ENCODE measurements at regions of chr1 and their contacts with region 1.

Region 1: DNA sequence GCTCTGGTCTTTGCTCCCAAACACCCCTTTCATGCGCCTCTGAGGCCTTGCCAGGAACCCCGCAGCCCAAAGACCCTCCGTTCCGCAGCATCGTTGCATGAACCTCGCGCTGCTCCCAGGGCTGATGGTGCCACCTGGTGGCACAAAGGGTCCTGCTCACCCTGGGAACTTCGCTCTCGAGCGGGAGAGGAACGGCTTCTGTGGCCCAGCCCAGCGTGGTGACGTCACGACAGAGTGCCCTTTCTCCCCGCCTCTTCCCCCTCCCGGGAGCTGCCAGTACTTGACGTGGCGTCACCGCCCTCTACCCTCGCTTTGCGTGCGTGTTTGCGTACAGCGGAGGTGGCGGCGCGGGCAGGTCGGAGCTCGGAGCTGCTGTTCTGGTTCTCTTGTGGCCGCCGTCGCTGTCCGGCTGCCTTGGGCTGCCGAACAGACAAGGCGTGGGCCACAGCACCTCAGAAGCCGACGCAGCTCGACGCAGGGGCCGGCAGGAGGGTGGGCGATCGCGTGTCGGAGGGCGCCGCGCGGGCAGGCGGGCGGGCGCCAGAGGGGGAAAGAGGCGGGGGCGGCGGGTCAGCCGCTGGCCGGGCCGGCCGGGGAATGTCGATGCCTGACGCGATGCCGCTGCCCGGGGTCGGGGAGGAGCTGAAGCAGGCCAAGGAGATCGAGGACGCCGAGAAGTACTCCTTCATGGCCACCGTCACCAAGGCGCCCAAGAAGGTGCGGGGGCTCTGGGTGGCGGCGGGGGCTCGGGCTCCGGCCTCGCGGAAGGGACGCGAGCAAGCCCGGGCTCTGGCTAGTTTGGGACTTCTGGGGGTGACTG is at the start of gene AHCYL1:
- DNase-seq: peak; percentile 92 to 97
- ATAC-seq: peak; percentile 84 to 89
- H3K4me3 ChIP-seq: peak within 1 kb of the TSS; percentile 89
- H3K27ac ChIP-seq: peak within 1 kb of the TSS; percentile 95 to 98
- H3K4me1 ChIP-seq: peaks cover 72% of the 10 kb centered on the region
- CTCF ChIP-seq: peak; percentile 86
- EP300 ChIP-seq: no peak
- POLR2A ChIP-seq: peak; percentile 77
- RAD21 ChIP-seq: peak; percentile 97 to 99
- polyA plus RNA-seq, gene AHCYL1: 147 and 148 TPM in 2 replicates

Region 2: DNA sequence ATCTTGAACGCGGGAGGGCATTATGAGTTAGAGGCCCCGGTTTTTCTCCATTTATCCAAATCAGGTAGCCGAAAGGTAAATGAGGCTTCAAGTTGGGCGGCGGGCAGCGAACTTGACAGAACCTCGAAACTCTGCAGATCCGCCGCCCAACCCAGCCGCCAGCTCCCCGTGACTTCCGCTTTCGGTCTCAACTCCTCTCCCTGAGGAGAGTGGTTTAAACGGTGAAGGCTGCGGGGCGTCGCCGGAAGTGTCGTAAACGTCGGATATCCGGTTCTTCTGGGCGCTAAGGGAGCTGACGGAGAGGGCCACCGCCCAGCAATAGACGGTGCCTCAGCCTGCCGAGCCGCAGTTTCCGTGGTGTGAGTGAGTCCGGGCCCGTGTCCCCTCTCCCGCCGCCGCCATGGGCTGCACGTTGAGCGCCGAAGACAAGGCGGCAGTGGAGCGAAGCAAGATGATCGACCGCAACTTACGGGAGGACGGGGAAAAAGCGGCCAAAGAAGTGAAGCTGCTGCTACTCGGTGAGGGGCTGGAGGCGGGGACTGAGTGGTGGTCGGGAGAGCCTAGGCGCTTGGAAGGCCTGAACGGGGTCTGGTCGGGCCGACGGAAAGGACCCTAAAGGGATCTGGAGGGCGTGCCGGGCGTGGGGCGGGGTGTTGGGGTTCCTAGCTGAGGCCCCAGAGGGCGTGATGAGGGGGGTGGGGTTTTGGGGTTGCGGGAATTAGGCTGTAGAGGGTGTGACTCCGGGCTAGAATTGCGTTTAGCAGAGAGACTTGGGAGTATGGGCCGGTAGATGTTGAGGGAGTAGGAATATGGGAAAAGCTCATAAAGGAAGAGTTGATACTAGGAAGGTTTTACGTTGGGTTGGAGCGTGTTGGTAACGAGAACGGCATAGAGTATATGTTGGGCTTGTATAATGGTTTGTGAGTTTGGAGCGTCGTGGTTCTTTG is 436.1 kb before region 1 on chr1 and contains the start of gene GNAI3:
- CTCF ChIA-PET with region 1: interaction called, 21 read pairs
- POLR2A ChIA-PET with region 1: interaction called, 14 read pairs
- DNase-seq: peak; percentile 91 to 93
- ATAC-seq: peak; percentile 97 to 99
- H3K4me3 ChIP-seq: peak within 1 kb of the TSS; percentile 99
- H3K27ac ChIP-seq: peak within 1 kb of the TSS; percentile 95 to 96
- H3K4me1 ChIP-seq: peaks cover 21% of the 10 kb centered on the region
- CTCF ChIP-seq: no peak
- EP300 ChIP-seq: no peak
- POLR2A ChIP-seq: peak; percentile 83
- RAD21 ChIP-seq: no peak
- polyA plus RNA-seq, gene GNAI3: 6.1 and 8.7 TPM in 2 replicates

Region 3: DNA sequence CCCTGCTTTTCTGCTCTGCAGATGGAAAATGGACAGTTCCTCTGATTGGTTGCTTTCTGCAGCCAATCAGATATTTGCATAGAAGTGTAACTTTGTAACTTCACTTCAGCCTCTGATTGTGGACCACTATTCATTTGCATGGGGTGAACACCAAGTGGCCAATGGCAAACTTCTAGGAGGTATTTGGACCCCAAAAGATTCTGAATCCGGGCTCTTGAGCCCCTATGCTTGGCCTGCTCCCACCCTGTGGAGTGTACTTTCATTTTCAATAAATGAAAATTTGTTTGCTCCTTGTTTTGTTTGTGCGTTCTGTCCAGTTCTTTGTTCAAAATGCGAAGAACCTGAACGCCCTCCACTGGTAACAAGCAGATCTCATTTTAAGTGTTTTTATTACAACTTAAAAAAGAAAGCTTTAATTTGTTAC is 335.2 kb before region 1 on chr1:
- CTCF ChIA-PET with region 1: interaction called, 15 read pairs
- POLR2A ChIA-PET with region 1: no interaction called
- DNase-seq: peak in 1 of 2 experiments; percentile 46
- ATAC-seq: peak in 1 of 2 experiments; percentile 67; a peak in 3 of 6 replicates
- H3K4me3 ChIP-seq: 0 out of 3 replicates have a peak overlapping the region, but pooled peaks have one; percentile 21
- H3K27ac ChIP-seq: peak overlapping the region; percentile 57 to 63; a peak in 5 of 6 replicates
- H3K4me1 ChIP-seq: peaks cover 17% of the 10 kb centered on the region; the same call in 2 of the 3 replicates
- CTCF ChIP-seq: peak; percentile 55
- EP300 ChIP-seq: no peak
- POLR2A ChIP-seq: no peak
- RAD21 ChIP-seq: peak; percentile 48 to 50

Region 4: DNA sequence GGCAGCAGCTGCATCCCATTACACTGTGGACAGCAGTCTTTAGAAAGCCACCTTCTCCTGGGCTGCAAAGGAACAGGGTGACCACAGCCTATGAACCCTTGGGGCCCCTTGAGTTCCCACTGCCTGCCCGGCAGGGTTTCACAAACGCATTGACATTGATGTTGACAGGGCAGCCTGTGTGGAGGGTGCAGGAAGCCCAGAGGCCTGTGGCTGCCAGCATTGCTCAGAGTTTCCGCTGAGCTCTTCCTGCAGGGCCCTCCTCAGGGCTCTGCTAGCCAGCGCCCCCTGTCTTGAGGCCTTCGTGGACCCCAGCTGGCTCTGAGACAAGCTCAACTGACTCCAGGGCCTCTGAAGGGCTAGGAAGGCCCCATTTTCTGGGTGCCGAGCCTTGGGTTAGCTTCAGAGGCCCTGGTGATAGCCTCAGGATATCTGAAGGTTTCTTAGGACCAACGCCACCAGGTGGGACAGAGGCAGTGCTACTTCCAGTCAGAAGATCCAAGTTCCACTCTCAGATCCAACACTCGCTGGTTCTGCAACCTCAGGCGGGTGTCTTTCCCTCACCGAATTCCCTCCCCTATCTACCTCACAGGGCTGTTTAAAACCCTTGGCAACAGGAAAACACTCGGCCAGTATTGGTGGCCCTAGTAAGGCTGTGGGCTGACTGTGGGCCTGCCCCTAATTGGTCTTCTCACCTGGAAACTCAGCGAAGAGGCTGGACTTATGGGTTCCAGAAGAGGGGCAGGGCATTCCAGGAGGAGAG is 193.8 kb before region 1 on chr1:
- CTCF ChIA-PET with region 1: interaction called, 969 read pairs
- POLR2A ChIA-PET with region 1: interaction called, 14 read pairs
- DNase-seq: peak in 1 of 2 experiments; percentile 61
- ATAC-seq: no peak
- H3K4me3 ChIP-seq: no peak overlapping the region
- H3K27ac ChIP-seq: peak overlapping the region; percentile 98
- H3K4me1 ChIP-seq: peaks cover 74% of the 10 kb centered on the region
- CTCF ChIP-seq: no peak
- EP300 ChIP-seq: no peak
- POLR2A ChIP-seq: no peak
- RAD21 ChIP-seq: no peak; a peak in 1 of 5 replicates

Region 5: GRCh38 chr1:109917768-109918606 is 66.7 kb before region 1 on chr1:
- CTCF ChIA-PET with region 1: interaction called, 63 read pairs
- POLR2A ChIA-PET with region 1: interaction called, 3 read pairs
- DNase-seq: no peak
- ATAC-seq: peak; percentile 57 to 62; a peak in 3 of 6 replicates
- H3K4me3 ChIP-seq: no peak overlapping the region
- H3K27ac ChIP-seq: peak overlapping the region; percentile 17 to 50; a peak in 4 of 6 replicates
- H3K4me1 ChIP-seq: peaks cover 54% of the 10 kb centered on the region
- CTCF ChIP-seq: no peak
- EP300 ChIP-seq: no peak
- POLR2A ChIP-seq: no peak
- RAD21 ChIP-seq: no peak

Region 6: DNA sequence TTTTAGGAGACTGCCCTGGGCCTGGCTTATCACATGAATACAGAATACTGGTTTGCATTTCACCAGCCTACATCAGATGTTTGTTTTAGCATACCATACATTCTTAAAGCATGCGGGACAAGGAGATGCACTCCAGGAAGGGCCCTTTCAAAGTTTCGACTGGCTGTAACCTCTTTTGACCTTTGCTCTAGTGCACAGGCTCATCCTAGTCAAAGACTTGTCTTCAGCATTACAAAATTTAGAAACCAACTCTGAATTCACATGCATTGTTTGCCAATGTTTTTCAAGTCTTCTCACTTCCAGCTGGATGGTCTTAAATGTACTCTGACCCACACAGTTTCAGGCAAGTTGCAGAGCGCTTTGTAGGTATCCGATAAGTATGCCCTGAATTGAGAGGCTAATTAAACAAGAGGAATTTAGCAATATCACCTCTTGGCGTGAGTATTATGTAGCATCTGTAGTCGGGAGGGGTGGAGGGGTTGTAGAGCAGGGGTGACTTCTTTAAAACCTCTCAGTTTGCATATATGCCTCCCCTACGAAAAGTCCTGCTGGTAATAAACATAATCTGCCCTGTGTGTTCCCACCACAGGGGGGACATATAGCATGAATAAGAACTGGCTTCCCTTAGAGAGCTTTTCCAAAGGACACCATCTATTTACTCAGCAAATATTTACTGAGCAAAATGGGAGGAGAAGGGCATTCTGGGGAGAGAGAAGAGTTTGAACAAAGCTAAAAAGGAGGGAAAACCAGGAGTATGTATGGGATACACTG is 24.5 kb before region 1 on chr1:
- CTCF ChIA-PET with region 1: interaction called, 63 read pairs
- POLR2A ChIA-PET with region 1: interaction called, 18 read pairs
- DNase-seq: peak; percentile 87 to 96
- ATAC-seq: peak; percentile 96 to 98
- H3K4me3 ChIP-seq: no peak overlapping the region
- H3K27ac ChIP-seq: peak overlapping the region; percentile 95 to 96
- H3K4me1 ChIP-seq: peaks cover 52% of the 10 kb centered on the region
- CTCF ChIP-seq: peak; percentile 27; the same call in 1 of the 3 replicates
- EP300 ChIP-seq: peak; percentile 15 to 84; a peak in 3 of 5 replicates
- POLR2A ChIP-seq: no peak
- RAD21 ChIP-seq: peak; percentile 46 to 47

Region 7: GRCh38 chr1:110136911-110137310 is 152.2 kb after region 1 on chr1:
- CTCF ChIA-PET with region 1: no interaction called
- POLR2A ChIA-PET with region 1: no interaction called
- DNase-seq: no peak
- ATAC-seq: no peak; a peak in 1 of 6 replicates
- H3K4me3 ChIP-seq: no peak overlapping the region
- H3K27ac ChIP-seq: no peak overlapping the region
- H3K4me1 ChIP-seq: no peaks in the 10 kb centered on the region
- CTCF ChIP-seq: no peak
- EP300 ChIP-seq: no peak
- POLR2A ChIP-seq: no peak
- RAD21 ChIP-seq: no peak

Region 8: GRCh38 chr1:110630839-110631663 is 646.4 kb after region 1 on chr1:
- CTCF ChIA-PET with region 1: no interaction called
- POLR2A ChIA-PET with region 1: no interaction called
- DNase-seq: peak; percentile 53 to 58
- ATAC-seq: peak; percentile 93 to 99
- H3K4me3 ChIP-seq: no peak overlapping the region
- H3K27ac ChIP-seq: no peak overlapping the region
- H3K4me1 ChIP-seq: no peaks in the 10 kb centered on the region
- CTCF ChIP-seq: peak; percentile 58
- EP300 ChIP-seq: no peak
- POLR2A ChIP-seq: no peak
- RAD21 ChIP-seq: peak; percentile 52 to 59